MCF 10A (cell line): ENCODE measurements at regions of chr19 and their contacts with region 1.

Region 1: GRCh38 chr19:50922317-50922853 is 11.2 kb upstream of the KLK4 start:
- DNase-seq: peak; percentile 83
- H3K4me3 Mint-ChIP-seq: no peak overlapping the region
- H3K27ac Mint-ChIP-seq: no peak overlapping the region
- H3K4me1 Mint-ChIP-seq: no peaks in the 10 kb centered on the region
- H3K27me3 Mint-ChIP-seq: peaks cover 25% of the 10 kb centered on the region
- CTCF ChIP-seq: peak; percentile 91

Region 2: GRCh38 chr19:50368649-50369570 is 553.5 kb before region 1 on chr19:
- CTCF ChIA-PET with region 1: interaction called, 5 read pairs
- POLR2A ChIA-PET with region 1: no interaction called
- intact Hi-C with region 1: loop called (anchors 2 kb)
- DNase-seq: peak; percentile 91
- H3K4me3 Mint-ChIP-seq: peak overlapping the region; percentile 89
- H3K27ac Mint-ChIP-seq: peak overlapping the region; percentile 79
- H3K4me1 Mint-ChIP-seq: peaks cover 6% of the 10 kb centered on the region
- H3K27me3 Mint-ChIP-seq: no peaks in the 10 kb centered on the region
- CTCF ChIP-seq: peak; percentile 83

Region 3: GRCh38 chr19:50669302-50670101 is 252.9 kb before region 1 on chr19:
- CTCF ChIA-PET with region 1: interaction called, 13 read pairs
- POLR2A ChIA-PET with region 1: no interaction called
- intact Hi-C with region 1: no loop called
- DNase-seq: peak; percentile 27
- H3K4me3 Mint-ChIP-seq: no peak overlapping the region
- H3K27ac Mint-ChIP-seq: no peak overlapping the region
- H3K4me1 Mint-ChIP-seq: no peaks in the 10 kb centered on the region
- H3K27me3 Mint-ChIP-seq: peaks cover 17% of the 10 kb centered on the region
- CTCF ChIP-seq: peak; percentile 66

Region 4: DNA sequence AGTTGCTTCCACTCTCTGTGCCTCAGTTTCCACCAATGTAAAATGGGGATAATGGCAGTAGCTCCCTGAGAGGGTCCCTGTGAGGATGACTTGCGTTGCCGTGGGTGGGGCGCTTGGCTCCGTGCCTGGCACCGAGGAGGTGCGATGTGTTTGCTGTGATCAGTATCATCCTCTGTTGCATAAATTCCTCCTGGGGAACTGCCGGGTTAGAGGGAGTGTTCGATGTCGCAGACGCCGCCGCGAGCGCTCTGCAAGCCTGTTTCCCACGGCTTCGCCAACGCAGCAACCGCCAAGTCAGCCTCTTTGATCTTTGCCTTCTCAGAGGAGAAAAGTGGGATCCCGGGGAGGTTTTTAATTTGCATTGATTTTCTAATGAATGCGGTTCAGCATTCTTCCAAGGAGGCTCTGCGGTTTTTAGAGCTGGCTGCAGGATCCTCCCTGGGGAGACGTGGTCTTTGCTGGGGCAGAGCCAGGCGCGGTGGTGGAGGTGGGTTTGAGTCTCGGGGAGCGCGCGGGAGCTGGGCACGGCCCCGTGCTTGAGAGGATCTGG is 144.6 kb before region 1 on chr19:
- CTCF ChIA-PET with region 1: interaction called, 5 read pairs
- POLR2A ChIA-PET with region 1: no interaction called
- intact Hi-C with region 1: loop called (anchors 2 kb)
- DNase-seq: no peak
- H3K4me3 Mint-ChIP-seq: no peak overlapping the region
- H3K27ac Mint-ChIP-seq: no peak overlapping the region
- H3K4me1 Mint-ChIP-seq: peaks cover 6% of the 10 kb centered on the region
- H3K27me3 Mint-ChIP-seq: peaks cover 47% of the 10 kb centered on the region
- CTCF ChIP-seq: no peak

Region 5: DNA sequence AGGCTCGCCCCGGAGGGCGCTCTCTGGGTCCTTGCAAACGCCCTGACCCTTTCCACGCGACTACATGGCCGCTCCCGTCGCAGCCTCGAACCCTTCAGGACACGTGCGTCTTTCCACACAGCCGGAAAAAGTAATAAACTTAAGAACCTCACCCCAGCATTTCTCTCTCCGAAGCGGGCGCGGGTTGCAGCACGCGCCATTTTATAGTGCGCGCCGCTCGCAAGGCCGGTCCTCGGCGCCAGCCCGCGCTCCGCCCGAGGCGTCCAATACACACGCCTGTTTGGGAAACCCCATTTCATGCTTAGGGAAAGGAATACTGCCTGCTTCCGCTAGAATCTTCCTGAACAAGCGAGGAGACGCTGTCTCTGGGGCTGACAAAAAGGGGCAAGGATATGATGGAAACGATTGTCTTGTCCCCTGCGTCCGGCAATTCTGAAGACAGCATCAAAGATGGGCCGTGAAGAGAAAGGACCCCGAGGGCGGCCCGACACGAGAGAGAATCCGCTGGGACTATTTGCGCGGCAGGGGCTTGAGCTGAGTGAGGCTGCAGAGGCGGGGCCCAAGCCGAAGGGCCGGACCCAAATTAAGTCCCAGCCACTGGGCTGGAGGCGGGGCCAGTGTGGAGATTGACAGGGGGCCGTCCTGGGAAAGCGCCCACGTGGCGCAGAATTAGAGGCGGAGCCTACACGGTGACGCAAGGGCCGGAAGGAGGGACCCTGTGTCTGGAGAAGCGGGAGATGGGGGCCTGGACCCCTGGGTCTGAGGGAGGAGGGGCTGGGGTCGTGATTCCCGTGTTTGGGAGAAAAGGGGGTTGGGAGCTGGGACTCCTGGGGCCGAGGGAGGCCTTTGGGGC is 117.7 kb before region 1 on chr19:
- CTCF ChIA-PET with region 1: interaction called, 13 read pairs
- POLR2A ChIA-PET with region 1: interaction called, 8 read pairs
- intact Hi-C with region 1: loop called (anchors 1 kb)
- DNase-seq: peak; percentile 99
- H3K4me3 Mint-ChIP-seq: peak overlapping the region; percentile 99
- H3K27ac Mint-ChIP-seq: peak overlapping the region; percentile 99
- H3K4me1 Mint-ChIP-seq: peaks cover 21% of the 10 kb centered on the region
- H3K27me3 Mint-ChIP-seq: no peaks in the 10 kb centered on the region
- CTCF ChIP-seq: no peak

Region 6: GRCh38 chr19:50826492-50827240 is 95.7 kb before region 1 on chr19:
- CTCF ChIA-PET with region 1: no interaction called
- POLR2A ChIA-PET with region 1: no interaction called
- intact Hi-C with region 1: no loop called
- DNase-seq: no peak
- H3K4me3 Mint-ChIP-seq: no peak overlapping the region
- H3K27ac Mint-ChIP-seq: no peak overlapping the region
- H3K4me1 Mint-ChIP-seq: peaks cover 14% of the 10 kb centered on the region
- H3K27me3 Mint-ChIP-seq: peaks cover 44% of the 10 kb centered on the region
- CTCF ChIP-seq: no peak

Region 7: DNA sequence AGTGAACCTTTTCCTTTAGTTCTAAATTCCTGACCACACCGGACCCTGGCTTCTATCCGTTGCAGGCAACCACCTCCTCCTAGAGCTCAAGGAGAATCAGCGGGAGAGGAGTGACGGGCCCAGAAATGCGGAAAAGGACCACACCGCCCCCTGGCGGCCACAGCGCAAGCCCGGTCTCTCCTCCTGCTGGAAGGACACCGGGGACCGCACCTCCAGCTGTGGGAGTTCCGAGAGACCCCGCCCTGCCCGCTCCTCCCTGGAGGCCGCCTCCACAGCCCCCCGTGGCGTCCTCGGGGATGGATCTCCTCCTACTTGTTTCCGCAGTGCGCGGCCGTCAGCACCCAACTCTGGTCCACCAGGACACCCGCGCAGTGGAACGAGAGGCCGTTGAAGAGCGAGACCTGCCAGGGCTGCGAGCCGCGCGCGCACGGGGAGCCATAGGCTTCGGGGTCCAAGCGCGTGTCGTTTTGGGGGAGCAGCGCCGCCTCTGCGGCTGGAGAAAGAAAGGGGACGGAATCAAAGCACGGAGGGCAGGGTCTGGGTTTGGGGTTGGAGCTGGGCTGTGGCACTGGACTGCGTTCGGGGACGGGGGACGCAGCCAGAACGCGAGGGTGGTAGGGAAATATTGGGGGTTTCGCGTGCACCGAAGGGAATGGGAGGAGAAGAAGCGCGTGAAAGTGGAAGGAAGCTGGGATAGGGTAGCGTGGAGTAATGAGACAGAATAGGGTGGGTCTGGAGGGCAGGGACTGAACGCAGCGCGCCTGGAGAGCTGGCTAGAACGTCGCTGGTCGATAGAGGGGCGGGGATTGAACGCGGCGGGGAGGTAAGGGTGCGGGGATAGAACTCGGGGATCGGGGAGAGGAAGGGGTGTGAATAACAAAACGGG is 94.7 kb after region 1 on chr19:
- CTCF ChIA-PET with region 1: interaction called, 12 read pairs
- POLR2A ChIA-PET with region 1: no interaction called
- intact Hi-C with region 1: no loop called
- DNase-seq: no peak
- H3K4me3 Mint-ChIP-seq: peak overlapping the region; percentile 3
- H3K27ac Mint-ChIP-seq: no peak overlapping the region
- H3K4me1 Mint-ChIP-seq: peaks cover 7% of the 10 kb centered on the region
- H3K27me3 Mint-ChIP-seq: peaks cover 40% of the 10 kb centered on the region
- CTCF ChIP-seq: peak; percentile 59

Region 8: DNA sequence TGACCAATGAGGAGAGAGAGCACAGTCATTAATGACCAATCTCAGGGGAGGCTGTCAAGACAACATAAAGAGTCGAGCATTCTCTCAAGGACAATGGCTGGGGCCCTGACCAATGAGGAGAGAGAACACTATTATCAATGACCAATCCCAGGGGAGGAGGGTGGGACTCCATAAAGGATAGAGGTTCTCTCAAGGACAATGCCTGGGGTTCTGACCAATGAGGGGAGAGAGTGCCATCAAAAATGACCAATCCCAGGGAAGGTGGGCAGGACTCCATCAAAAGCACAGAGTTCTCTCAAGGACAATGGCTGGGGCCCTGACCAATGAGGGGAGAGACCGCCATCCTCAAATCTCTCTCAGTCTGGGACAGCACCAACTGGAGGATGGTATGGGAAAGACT is 107.3 kb after region 1 on chr19:
- CTCF ChIA-PET with region 1: no interaction called
- POLR2A ChIA-PET with region 1: no interaction called
- intact Hi-C with region 1: no loop called
- DNase-seq: no peak
- H3K4me3 Mint-ChIP-seq: no peak overlapping the region
- H3K27ac Mint-ChIP-seq: no peak overlapping the region
- H3K4me1 Mint-ChIP-seq: peaks cover 6% of the 10 kb centered on the region
- H3K27me3 Mint-ChIP-seq: peaks cover 7% of the 10 kb centered on the region
- CTCF ChIP-seq: no peak